Endothelial cell of umbilical vein (primary cell): ENCODE measurements at regions of chr18 and their contacts with region 1.

Region 1: GRCh38 chr18:63422087-63422809 is at the start of gene VPS4B:
- DNase-seq: peak; percentile 100
- H3K4me3 ChIP-seq: peak within 1 kb of the TSS; percentile 67 to 95 (median 83)
- H3K27ac ChIP-seq: peak within 1 kb of the TSS; percentile 69
- H3K4me1 ChIP-seq: peaks cover 10% of the 10 kb centered on the region
- H3K27me3 ChIP-seq: peaks cover 2 to 3% of the 10 kb centered on the region in 2 experiments
- CTCF ChIP-seq: no peak
- POLR2A ChIP-seq: peak; percentile 79
- total RNA-seq, gene VPS4B: 50.2 and 54.7 TPM in 2 replicates

Region 2: DNA sequence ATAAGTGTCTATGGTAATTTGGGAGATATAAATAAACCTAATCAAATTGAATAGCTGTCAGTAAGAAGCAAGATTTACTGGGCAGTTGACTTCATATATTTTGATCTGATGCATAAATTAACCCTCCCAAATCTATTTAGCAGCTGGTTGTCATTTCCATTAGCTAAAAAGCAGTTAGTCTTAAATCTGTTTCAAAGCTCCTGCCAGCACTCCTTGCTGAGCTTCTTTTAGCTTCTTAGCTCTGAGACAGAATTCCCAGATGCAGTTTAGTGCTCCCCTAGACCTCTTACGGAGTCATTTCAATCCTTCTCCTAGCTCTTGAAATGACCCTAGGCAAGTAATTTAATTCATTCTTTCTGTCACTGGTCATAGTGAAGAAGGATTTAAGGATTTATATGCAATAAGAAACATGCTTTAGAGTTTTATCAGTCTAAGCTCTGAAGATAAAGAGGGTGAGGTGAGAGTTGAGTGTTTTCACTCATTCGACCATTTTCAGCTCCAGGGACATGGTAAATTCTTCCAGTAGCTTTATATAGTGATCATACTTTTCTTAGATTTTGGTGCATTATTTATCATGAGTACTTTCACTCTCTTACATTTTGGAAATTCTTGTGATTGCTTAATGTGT is 608.0 kb before region 1 on chr18:
- CTCF ChIA-PET with region 1: no interaction called
- POLR2A ChIA-PET with region 1: no interaction called
- dilution Hi-C with region 1: no loop called
- intact Hi-C with region 1: no loop called
- DNase-seq: no peak
- H3K4me3 ChIP-seq: no peak overlapping the region
- H3K27ac ChIP-seq: no peak overlapping the region
- H3K4me1 ChIP-seq: no peaks in the 10 kb centered on the region
- H3K27me3 ChIP-seq: no peaks in the 10 kb centered on the region
- CTCF ChIP-seq: no peak
- POLR2A ChIP-seq: no peak

Region 3: GRCh38 chr18:63074981-63075404 is 347.3 kb before region 1 on chr18:
- CTCF ChIA-PET with region 1: no interaction called
- POLR2A ChIA-PET with region 1: no interaction called
- dilution Hi-C with region 1: no loop called
- intact Hi-C with region 1: no loop called
- DNase-seq: peak; percentile 56
- H3K4me3 ChIP-seq: peak overlapping the region; percentile 1 to 47 (median 41)
- H3K27ac ChIP-seq: no peak overlapping the region
- H3K4me1 ChIP-seq: no peaks in the 10 kb centered on the region
- H3K27me3 ChIP-seq: peaks cover 3 to 5% of the 10 kb centered on the region in 2 experiments
- CTCF ChIP-seq: no peak
- POLR2A ChIP-seq: no peak

Region 4: GRCh38 chr18:63138436-63139340 is 283.6 kb before region 1 on chr18:
- CTCF ChIA-PET with region 1: no interaction called
- POLR2A ChIA-PET with region 1: no interaction called
- dilution Hi-C with region 1: no loop called
- intact Hi-C with region 1: loop called (anchors 2 kb)
- DNase-seq: no peak
- H3K4me3 ChIP-seq: peak overlapping the region in 1 of 3 experiments; percentile 16
- H3K27ac ChIP-seq: peak overlapping the region; percentile 75
- H3K4me1 ChIP-seq: peaks cover 22% of the 10 kb centered on the region
- H3K27me3 ChIP-seq: no peaks in the 10 kb centered on the region
- CTCF ChIP-seq: no peak
- POLR2A ChIP-seq: no peak

Region 5: GRCh38 chr18:63339920-63340484 is 82.2 kb before region 1 on chr18:
- CTCF ChIA-PET with region 1: no interaction called
- POLR2A ChIA-PET with region 1: no interaction called
- dilution Hi-C with region 1: no loop called
- intact Hi-C with region 1: loop called (anchors 5 kb)
- DNase-seq: peak; percentile 40
- H3K4me3 ChIP-seq: no peak overlapping the region
- H3K27ac ChIP-seq: no peak overlapping the region
- H3K4me1 ChIP-seq: no peaks in the 10 kb centered on the region
- H3K27me3 ChIP-seq: no peaks in the 10 kb centered on the region
- CTCF ChIP-seq: peak; percentile 46 to 49
- POLR2A ChIP-seq: no peak

Region 6: DNA sequence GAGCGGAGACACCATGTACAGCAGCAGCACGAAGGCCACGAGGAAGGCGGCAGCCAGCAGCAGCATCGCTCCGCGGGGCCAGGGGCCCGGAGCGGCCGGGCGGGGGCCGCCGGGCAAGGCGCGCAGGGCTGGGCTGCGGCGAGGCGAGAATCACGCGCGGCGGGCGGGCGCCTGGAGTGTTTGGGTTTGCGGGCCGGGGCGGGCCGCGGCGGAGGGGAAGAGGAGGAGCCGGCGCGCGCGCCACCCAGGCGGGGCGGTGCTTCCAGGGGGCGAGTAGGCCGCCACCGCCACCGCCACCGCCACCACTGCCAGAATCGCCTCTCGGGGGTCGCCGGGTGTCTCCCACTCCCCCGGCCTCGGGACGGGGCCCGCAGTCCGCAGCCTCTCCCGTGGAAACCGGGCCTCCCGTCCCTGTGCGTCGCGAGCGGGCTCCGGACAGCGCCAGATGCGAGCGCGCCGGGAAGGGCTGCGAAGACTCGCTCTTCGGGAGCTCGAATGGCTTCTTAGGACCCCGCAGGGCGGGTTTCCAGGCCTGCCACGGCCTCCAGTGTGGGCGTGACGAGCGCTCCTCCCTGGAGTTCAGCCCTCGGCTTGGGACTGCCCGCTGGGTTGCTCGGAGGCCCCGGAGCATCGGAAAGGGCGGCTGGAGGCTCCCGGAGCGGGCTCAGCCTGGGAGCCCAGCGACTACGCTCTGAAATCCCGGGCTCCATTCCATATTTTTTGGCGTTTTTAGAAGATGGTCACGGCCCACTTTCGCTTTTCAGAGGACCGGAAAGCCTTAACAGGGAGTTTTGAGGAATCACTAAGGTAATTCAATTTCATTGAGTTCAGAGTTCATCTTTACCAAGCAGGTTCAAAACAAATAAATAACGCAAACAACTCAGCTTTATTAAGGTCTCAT is 54.9 kb before region 1 on chr18 and contains the start of gene KDSR:
- CTCF ChIA-PET with region 1: no interaction called
- POLR2A ChIA-PET with region 1: interaction called, 7 read pairs
- dilution Hi-C with region 1: no loop called
- intact Hi-C with region 1: loop called (anchors 1 kb)
- DNase-seq: peak; percentile 98
- H3K4me3 ChIP-seq: peak within 1 kb of the TSS; percentile 85 to 95 (median 94)
- H3K27ac ChIP-seq: peak within 1 kb of the TSS; percentile 89
- H3K4me1 ChIP-seq: peaks cover 12% of the 10 kb centered on the region
- H3K27me3 ChIP-seq: no peaks in the 10 kb centered on the region
- CTCF ChIP-seq: no peak
- POLR2A ChIP-seq: peak; percentile 92
- total RNA-seq, gene KDSR: 40.6 and 43.1 TPM in 2 replicates

Region 7: GRCh38 chr18:63969960-63970802 is 547.9 kb after region 1 on chr18 and contains the start of gene SERPINB8:
- CTCF ChIA-PET with region 1: no interaction called
- POLR2A ChIA-PET with region 1: no interaction called
- dilution Hi-C with region 1: no loop called
- intact Hi-C with region 1: loop called (anchors 1 kb)
- DNase-seq: peak; percentile 86
- H3K4me3 ChIP-seq: peak within 1 kb of the TSS; percentile 60 to 94 (median 63)
- H3K27ac ChIP-seq: peak within 1 kb of the TSS; percentile 99
- H3K4me1 ChIP-seq: peaks cover 14% of the 10 kb centered on the region
- H3K27me3 ChIP-seq: no peaks in the 10 kb centered on the region
- CTCF ChIP-seq: no peak
- POLR2A ChIP-seq: peak; percentile 82
- total RNA-seq, gene SERPINB8: 24.1 and 25.7 TPM in 2 replicates